Sigmoid colon (tissue), 7 donors: ENCODE measurements at regions of chr6 and their contacts with region 1.

Region 1: GRCh38 chr6:105424175-105424783 is 21.4 kb upstream of the PREP start:
- DNase-seq: no peak
- H3K4me3 ChIP-seq: no peak overlapping the region
- H3K27ac ChIP-seq: no peak overlapping the region
- H3K4me1 ChIP-seq: peaks cover 0 to 6% (median 0%) of the 10 kb centered on the region in 4 donors
- H3K27me3 ChIP-seq: no peaks in the 10 kb centered on the region
- CTCF ChIP-seq: peak in 3 of 4 experiments; percentile 38 to 64 (median 48)
- EP300 ChIP-seq: no peak
- POLR2A ChIP-seq: no peak

Region 2: GRCh38 chr6:105087571-105088211 is 336.6 kb before region 1 on chr6:
- intact Hi-C with region 1: loop called (anchors 5 kb)
- DNase-seq: no peak
- H3K4me3 ChIP-seq: no peak overlapping the region
- H3K27ac ChIP-seq: no peak overlapping the region
- H3K4me1 ChIP-seq: peaks cover 0 to 16% (median 9%) of the 10 kb centered on the region in 4 donors
- H3K27me3 ChIP-seq: no peaks in the 10 kb centered on the region
- CTCF ChIP-seq: peak; percentile 60 to 82 (median 78)
- EP300 ChIP-seq: no peak
- POLR2A ChIP-seq: no peak

Region 3: GRCh38 chr6:105336986-105337385 is 87.3 kb before region 1 on chr6:
- intact Hi-C with region 1: no loop called
- DNase-seq: no peak
- H3K4me3 ChIP-seq: no peak overlapping the region
- H3K27ac ChIP-seq: no peak overlapping the region
- H3K4me1 ChIP-seq: peaks cover 0 to 1% (median 0%) of the 10 kb centered on the region in 4 donors
- H3K27me3 ChIP-seq: no peaks in the 10 kb centered on the region
- CTCF ChIP-seq: no peak
- EP300 ChIP-seq: no peak
- POLR2A ChIP-seq: no peak

Region 4: GRCh38 chr6:105545947-105546731 is 121.9 kb after region 1 on chr6:
- intact Hi-C with region 1: no loop called
- DNase-seq: no peak
- H3K4me3 ChIP-seq: no peak overlapping the region
- H3K27ac ChIP-seq: no peak overlapping the region
- H3K4me1 ChIP-seq: no peaks in the 10 kb centered on the region
- H3K27me3 ChIP-seq: no peaks in the 10 kb centered on the region
- CTCF ChIP-seq: no peak
- EP300 ChIP-seq: no peak
- POLR2A ChIP-seq: no peak